ENCODE measurements at regions of chr17 and their contacts with region 1.

Region 1: DNA sequence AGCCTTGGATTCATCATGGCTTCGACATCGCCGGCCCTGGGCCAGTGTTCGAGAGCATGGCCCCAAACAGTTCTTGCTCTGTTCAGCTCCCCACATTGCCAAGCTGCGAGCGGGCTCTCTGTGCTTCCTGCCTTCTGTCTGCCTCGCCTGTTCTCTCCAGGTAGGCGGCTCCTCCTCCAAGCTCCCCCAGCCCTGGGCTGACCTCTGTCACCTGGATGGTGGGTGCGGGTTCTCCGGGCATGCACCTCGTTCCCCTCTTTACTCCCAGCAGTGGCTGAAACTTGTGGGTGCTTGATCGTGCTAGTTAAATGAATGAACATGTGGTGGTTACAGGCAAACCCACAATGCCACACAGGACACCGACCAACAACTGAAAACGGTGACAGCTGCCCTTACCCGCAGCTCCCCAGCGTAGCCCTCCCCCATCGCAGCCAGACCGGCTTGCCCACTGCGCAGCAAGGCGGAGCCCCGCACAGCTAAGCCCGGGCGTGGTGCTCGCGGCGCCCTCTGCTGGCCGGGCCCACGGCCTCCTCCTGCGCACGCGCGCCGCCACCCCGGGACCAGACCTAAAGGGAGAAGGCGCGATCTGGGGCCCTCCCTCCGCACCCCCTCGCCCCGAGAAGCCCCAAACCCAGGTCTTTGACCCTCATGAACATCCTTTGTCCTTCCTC is 23.0 kb upstream of the EIF1 start:
- DNase-seq: peak; percentile 64 to 94 (median 82)
- ATAC-seq: peak; percentile 80 to 86 (median 84)
- H3K4me3 ChIP-seq: peak overlapping the region; percentile 75 to 85
- H3K4me3 Mint-ChIP-seq: peak overlapping the region; percentile 79 to 99 (median 87)
- H3K27ac ChIP-seq: peak overlapping the region; percentile 98
- H3K27ac Mint-ChIP-seq: peak overlapping the region; percentile 96 to 98
- H3K4me1 ChIP-seq: peaks cover 7 to 36% of the 10 kb centered on the region in 2 experiments
- H3K4me1 Mint-ChIP-seq: peaks cover 21 to 28% (median 27%) of the 10 kb centered on the region in 3 donors
- H3K27me3 ChIP-seq: no peaks in the 10 kb centered on the region
- H3K27me3 Mint-ChIP-seq: no peaks in the 10 kb centered on the region

Region 2: DNA sequence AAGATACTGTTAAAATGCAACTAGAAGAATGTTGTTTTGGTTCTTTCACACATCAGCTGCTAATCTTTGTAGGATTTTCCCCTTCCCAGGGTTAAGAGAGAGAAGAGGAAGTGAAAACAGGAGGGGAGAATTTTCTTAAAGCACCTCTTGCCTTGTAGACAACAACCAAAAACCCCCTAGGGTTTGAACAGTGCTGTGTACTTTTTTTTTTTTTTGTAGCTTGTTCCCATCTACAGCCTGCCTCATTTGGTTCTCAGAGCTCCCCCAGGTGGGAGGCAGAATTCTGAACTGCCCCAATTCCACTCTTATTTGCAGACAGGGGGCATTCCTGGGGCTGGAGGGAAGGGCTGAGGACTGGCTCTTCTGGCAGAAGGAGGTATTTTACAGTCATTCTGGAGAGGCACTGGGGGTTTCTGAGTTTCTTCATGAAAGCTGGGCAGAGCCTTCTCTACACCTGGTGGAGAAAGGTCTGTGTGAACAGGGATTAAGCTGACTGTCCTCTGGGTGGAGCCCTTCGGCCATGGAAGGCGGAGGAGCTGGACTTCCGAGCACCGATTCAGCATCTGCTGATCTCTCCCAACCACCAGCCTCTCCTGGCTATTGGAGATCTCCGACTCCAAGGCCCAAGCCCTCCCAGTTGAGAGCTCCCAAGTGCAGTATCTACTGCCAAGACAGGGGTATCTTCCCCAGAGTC is 1050.3 kb before region 1 on chr17:
- CTCF ChIA-PET with region 1: no interaction called
- POLR2A ChIA-PET with region 1: interaction called in 1 of 2 experiments, 12 read pairs
- DNase-seq: peak in 25 of 35 experiments; percentile 32 to 82 (median 58)
- ATAC-seq: peak; percentile 44 to 69 (median 46)
- H3K4me3 ChIP-seq: no peak overlapping the region
- H3K4me3 Mint-ChIP-seq: peak overlapping the region; percentile 61 to 94 (median 64)
- H3K27ac ChIP-seq: peak overlapping the region; percentile 99
- H3K27ac Mint-ChIP-seq: peak overlapping the region; percentile 87 to 100
- H3K4me1 ChIP-seq: peaks cover 40 to 76% of the 10 kb centered on the region in 2 experiments
- H3K4me1 Mint-ChIP-seq: peaks cover 71 to 86% (median 72%) of the 10 kb centered on the region in 3 donors
- H3K27me3 ChIP-seq: no peaks in the 10 kb centered on the region
- H3K27me3 Mint-ChIP-seq: no peaks in the 10 kb centered on the region

Region 3: DNA sequence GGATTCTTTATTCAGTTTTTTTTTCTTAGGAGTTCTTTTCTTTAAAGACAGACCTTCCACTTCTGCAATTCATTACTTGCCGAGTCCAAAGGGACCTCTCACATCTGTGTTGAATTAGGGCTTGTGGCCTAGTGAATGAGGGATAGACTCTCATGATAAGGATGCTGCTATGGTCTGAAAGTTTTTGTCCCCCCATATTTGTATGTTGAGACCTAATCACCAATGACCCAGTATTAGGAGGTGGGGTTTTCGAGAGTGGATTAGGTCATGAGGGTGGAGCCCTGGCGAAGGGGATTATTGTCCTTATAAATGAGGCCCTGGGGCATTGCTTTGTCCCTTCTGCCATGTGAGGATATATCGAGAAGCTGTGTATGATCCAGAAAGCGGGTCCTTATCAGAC is 808.2 kb before region 1 on chr17:
- CTCF ChIA-PET with region 1: interaction called, 8 to 46 read pairs
- POLR2A ChIA-PET with region 1: interaction called in 1 of 2 experiments, 5 read pairs
- DNase-seq: no peak
- ATAC-seq: no peak
- H3K4me3 ChIP-seq: no peak overlapping the region
- H3K4me3 Mint-ChIP-seq: no peak overlapping the region
- H3K27ac ChIP-seq: no peak overlapping the region
- H3K27ac Mint-ChIP-seq: no peak overlapping the region
- H3K4me1 ChIP-seq: no peaks in the 10 kb centered on the region
- H3K4me1 Mint-ChIP-seq: peaks cover 0 to 7% (median 3%) of the 10 kb centered on the region in 3 donors
- H3K27me3 ChIP-seq: peaks cover 0 to 7% of the 10 kb centered on the region in 2 experiments
- H3K27me3 Mint-ChIP-seq: peaks cover 14 to 21% of the 10 kb centered on the region in 2 donors

Region 4: DNA sequence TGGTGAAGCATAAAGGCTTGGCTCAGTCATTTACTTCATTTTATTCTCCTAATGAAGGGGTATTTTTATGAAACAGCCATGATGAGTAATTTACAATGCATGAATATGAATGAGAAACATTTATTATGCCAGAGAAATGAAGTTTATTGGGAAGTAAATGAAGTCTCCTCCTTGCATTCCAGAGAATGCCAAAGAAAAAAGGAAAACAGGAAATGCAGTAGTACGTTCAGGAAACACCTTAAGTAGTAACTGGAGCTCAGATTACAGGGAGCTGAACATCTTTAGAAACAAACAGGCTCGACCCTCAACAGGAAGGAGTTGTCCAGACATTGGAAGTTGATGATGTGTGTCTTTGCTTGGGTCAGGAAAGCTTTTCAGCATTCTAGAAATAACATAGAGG is 288.2 kb before region 1 on chr17:
- CTCF ChIA-PET with region 1: no interaction called
- POLR2A ChIA-PET with region 1: no interaction called
- DNase-seq: no peak
- ATAC-seq: no peak
- H3K4me3 ChIP-seq: no peak overlapping the region
- H3K4me3 Mint-ChIP-seq: no peak overlapping the region
- H3K27ac ChIP-seq: no peak overlapping the region
- H3K27ac Mint-ChIP-seq: no peak overlapping the region
- H3K4me1 ChIP-seq: peaks cover 2 to 6% of the 10 kb centered on the region in 2 experiments
- H3K4me1 Mint-ChIP-seq: peaks cover 16 to 36% (median 22%) of the 10 kb centered on the region in 3 donors
- H3K27me3 ChIP-seq: no peaks in the 10 kb centered on the region
- H3K27me3 Mint-ChIP-seq: peaks cover 0 to 9% of the 10 kb centered on the region in 2 donors

Region 5: GRCh38 chr17:41548844-41549595 is 116.7 kb before region 1 on chr17:
- CTCF ChIA-PET with region 1: interaction called, 11 to 26 read pairs
- POLR2A ChIA-PET with region 1: no interaction called
- DNase-seq: peak; percentile 67 to 91 (median 83)
- ATAC-seq: peak; percentile 87 to 91 (median 89)
- H3K4me3 ChIP-seq: peak overlapping the region; percentile 26 to 39
- H3K4me3 Mint-ChIP-seq: peak overlapping the region; percentile 34 to 77 (median 63)
- H3K27ac ChIP-seq: peak overlapping the region; percentile 51
- H3K27ac Mint-ChIP-seq: peak overlapping the region; percentile 61 to 76
- H3K4me1 ChIP-seq: peaks cover 0 to 20% of the 10 kb centered on the region in 2 experiments
- H3K4me1 Mint-ChIP-seq: peaks cover 10 to 21% (median 17%) of the 10 kb centered on the region in 3 donors
- H3K27me3 ChIP-seq: peaks cover 0 to 42% of the 10 kb centered on the region in 2 experiments
- H3K27me3 Mint-ChIP-seq: peaks cover 4 to 11% of the 10 kb centered on the region in 2 donors

Region 6: DNA sequence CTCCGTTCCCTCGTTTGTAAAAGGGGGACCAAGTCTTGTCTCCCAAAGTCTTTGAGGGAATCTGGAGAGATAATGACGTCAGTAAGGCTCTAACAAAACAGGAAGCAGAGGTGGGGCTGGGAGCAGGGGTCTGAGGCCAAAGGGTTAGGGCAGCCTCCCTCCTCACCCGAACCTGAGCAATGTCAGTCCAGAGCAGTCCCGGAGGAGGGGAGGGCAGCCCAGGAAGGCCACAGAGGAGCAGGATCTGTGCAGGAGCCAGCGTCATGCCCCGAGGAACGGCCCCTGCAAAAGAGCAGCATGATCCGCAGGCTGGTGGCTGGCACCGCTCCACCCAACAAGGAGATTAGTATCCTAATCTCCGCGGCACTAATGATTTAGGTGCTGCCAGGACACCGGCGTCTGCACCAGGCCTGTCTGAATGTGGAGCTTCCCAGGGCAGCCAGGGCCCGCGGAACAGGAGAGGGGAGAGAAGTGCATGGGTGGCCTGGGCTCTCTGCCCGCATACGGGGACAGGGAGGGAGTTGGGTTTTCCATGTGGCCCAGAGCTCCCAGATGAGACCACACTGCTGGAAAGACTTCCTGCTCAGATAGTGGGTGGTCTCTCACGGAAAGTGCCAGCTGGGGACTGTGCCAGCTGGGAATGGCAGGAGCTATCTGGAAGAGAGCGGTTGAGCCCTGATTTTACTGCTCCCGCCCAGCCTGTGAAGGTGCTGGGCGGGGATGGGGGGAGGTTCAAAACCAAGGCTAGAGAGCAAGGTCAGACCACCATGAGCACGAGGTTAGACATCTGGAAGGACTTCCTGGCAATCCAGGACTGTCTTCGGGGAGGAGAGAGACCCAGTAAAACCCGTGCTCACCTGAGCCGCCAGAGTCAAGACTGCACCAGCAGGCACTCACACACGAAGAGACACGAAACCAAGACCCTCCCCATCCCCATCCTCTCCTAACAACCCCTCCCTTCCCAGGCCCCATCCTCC is 30.3 kb before region 1 on chr17:
- CTCF ChIA-PET with region 1: no interaction called
- POLR2A ChIA-PET with region 1: no interaction called
- DNase-seq: no peak
- ATAC-seq: no peak
- H3K4me3 ChIP-seq: no peak overlapping the region
- H3K4me3 Mint-ChIP-seq: no peak overlapping the region
- H3K27ac ChIP-seq: no peak overlapping the region
- H3K27ac Mint-ChIP-seq: no peak overlapping the region
- H3K4me1 ChIP-seq: no peaks in the 10 kb centered on the region
- H3K4me1 Mint-ChIP-seq: no peaks in the 10 kb centered on the region
- H3K27me3 ChIP-seq: peaks cover 0 to 13% of the 10 kb centered on the region in 2 experiments
- H3K27me3 Mint-ChIP-seq: peaks cover 1 to 4% of the 10 kb centered on the region in 2 donors

Region 7: DNA sequence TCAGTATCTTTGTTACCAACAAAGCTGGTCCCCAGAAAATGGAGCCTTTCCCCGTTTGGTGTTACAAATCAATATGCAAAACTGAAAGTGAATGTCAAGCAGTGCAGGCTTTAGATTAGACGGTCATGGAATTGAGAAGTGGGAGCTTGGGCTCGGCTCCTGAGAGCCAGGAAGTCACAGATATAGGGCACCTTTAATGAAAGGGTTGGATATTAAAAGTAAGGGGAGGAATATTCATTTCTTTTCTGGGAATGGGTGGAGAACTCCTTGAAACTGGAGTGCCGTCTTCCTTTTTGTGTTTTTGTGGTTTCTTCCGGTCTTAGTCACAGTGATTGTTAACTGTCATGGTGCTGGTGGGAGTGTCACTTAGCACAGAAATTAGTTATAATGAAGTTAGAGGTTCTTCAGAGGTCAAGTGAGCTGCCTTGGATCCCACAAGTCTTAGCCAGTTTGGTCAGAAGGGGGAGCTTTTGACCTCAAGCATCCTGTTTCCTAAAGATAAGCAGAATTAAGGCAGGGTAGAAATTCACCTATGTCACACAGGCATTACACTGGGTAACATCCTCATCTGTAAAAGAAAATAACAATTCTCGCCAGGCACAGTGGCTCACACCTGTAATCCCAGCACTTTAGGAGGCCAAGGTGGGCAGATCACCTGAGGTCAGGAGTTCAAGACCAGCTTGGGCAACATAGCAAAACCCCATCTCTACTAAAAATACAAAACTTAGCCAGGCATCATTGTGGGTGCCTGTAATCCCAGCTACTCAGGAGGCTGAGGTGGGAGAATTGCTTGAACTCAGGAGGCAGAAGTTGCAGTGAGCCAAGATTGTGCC is 13.4 kb after region 1 on chr17:
- CTCF ChIA-PET with region 1: interaction called in 1 of 2 experiments, 48 read pairs
- POLR2A ChIA-PET with region 1: interaction called in 1 of 2 experiments, 16 read pairs
- DNase-seq: peak in 31 of 35 experiments; percentile 10 to 84 (median 48)
- ATAC-seq: peak; percentile 88 to 97 (median 92)
- H3K4me3 ChIP-seq: peak overlapping the region; percentile 38 to 47
- H3K4me3 Mint-ChIP-seq: peak overlapping the region; percentile 79 to 88 (median 83)
- H3K27ac ChIP-seq: peak overlapping the region; percentile 89
- H3K27ac Mint-ChIP-seq: peak overlapping the region; percentile 95 to 99
- H3K4me1 ChIP-seq: peaks cover 16 to 35% of the 10 kb centered on the region in 2 experiments
- H3K4me1 Mint-ChIP-seq: peaks cover 28 to 45% (median 34%) of the 10 kb centered on the region in 3 donors
- H3K27me3 ChIP-seq: no peaks in the 10 kb centered on the region
- H3K27me3 Mint-ChIP-seq: no peaks in the 10 kb centered on the region

Region 8: GRCh38 chr17:41695954-41696756 is 30.5 kb after region 1 on chr17:
- CTCF ChIA-PET with region 1: interaction called in 1 of 2 experiments, 10 read pairs
- POLR2A ChIA-PET with region 1: interaction called, 7 read pairs
- DNase-seq: peak; percentile 39 to 95 (median 69)
- ATAC-seq: peak; percentile 21 to 66 (median 52)
- H3K4me3 ChIP-seq: no peak overlapping the region
- H3K4me3 Mint-ChIP-seq: peak overlapping the region in 1 of 3 donors; percentile 39
- H3K27ac ChIP-seq: no peak overlapping the region
- H3K27ac Mint-ChIP-seq: peak overlapping the region; percentile 23 to 76
- H3K4me1 ChIP-seq: peaks cover 0 to 12% of the 10 kb centered on the region in 2 experiments
- H3K4me1 Mint-ChIP-seq: peaks cover 30 to 32% (median 30%) of the 10 kb centered on the region in 3 donors
- H3K27me3 ChIP-seq: no peaks in the 10 kb centered on the region
- H3K27me3 Mint-ChIP-seq: no peaks in the 10 kb centered on the region

Region 9: GRCh38 chr17:41750862-41751261 is 85.2 kb after region 1 on chr17:
- CTCF ChIA-PET with region 1: no interaction called
- POLR2A ChIA-PET with region 1: no interaction called
- DNase-seq: no peak
- ATAC-seq: no peak
- H3K4me3 ChIP-seq: no peak overlapping the region
- H3K4me3 Mint-ChIP-seq: no peak overlapping the region
- H3K27ac ChIP-seq: no peak overlapping the region
- H3K27ac Mint-ChIP-seq: no peak overlapping the region
- H3K4me1 ChIP-seq: no peaks in the 10 kb centered on the region
- H3K4me1 Mint-ChIP-seq: no peaks in the 10 kb centered on the region
- H3K27me3 ChIP-seq: peaks cover 0 to 29% of the 10 kb centered on the region in 2 experiments
- H3K27me3 Mint-ChIP-seq: peaks cover 0 to 5% of the 10 kb centered on the region in 2 donors

Region 10: DNA sequence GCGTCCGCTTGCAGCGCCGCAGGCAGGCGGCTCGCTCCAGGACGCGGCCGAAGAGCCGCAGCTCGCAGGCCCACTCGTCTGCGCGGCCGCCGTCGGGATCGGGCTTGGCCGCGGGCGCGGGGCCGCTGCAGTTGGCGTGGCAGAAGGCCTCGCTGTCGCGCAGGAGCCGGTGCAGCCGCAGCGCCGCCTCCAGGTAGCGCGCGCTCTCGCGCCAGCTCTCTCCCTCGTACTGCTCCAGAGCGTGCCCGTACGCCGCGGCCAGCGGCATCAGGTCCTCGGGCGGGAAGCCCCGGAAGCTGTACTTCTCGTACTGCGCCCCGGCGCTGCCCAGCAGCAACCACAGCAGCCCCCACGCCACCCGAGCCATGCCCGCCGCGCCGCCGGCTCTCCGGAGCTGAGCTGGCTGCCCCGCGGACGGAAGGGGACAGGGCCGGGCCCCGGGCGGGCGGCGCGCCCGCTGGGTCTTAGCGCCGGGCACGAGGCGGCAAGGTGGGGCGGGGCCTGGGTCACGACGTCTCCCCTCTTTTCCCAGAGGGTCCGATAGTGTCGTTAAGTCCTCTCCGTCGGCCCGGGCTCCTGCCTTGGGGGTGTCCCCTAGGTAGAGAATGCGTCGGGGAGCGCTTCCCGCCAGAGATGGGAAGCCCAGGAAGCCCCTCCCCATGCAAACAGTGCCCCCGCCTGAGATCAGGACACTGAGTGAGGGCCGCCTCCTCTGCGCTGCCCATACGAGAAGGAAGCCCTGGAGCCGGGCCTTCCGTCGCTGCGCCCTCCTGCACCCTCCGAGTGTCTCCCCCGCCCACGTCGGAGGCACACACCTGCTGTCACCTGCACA is 146.1 kb after region 1 on chr17 and contains the start of gene P3H4:
- CTCF ChIA-PET with region 1: no interaction called
- POLR2A ChIA-PET with region 1: no interaction called
- DNase-seq: peak; percentile 34 to 85 (median 67)
- ATAC-seq: peak; percentile 92 to 94 (median 92)
- H3K4me3 ChIP-seq: peak within 1 kb of the TSS; percentile 64 to 75
- H3K4me3 Mint-ChIP-seq: peak within 1 kb of the TSS; percentile 84 to 96 (median 90)
- H3K27ac ChIP-seq: no peak within 1 kb of the TSS
- H3K27ac Mint-ChIP-seq: peak within 1 kb of the TSS; percentile 22 to 57
- H3K4me1 ChIP-seq: peaks cover 0 to 33% of the 10 kb centered on the region in 2 experiments
- H3K4me1 Mint-ChIP-seq: peaks cover 20 to 28% (median 25%) of the 10 kb centered on the region in 3 donors
- H3K27me3 ChIP-seq: peaks cover 0 to 25% of the 10 kb centered on the region in 2 experiments
- H3K27me3 Mint-ChIP-seq: no peaks in the 10 kb centered on the region
- total RNA-seq, gene P3H4: 2.9 to 11.0 (median 7.7) TPM

Measured in T-cell (primary cell).